SK-N-SH (cell line): ENCODE measurements at regions of chr2 and their contacts with region 1.

Region 1: GRCh38 chr2:11411768-11412448 is 54.1 kb downstream of the E2F6 start:
- DNase-seq: peak; percentile 85
- H3K4me3 ChIP-seq: peak overlapping the region; percentile 46 to 49
- H3K27ac ChIP-seq: no peak overlapping the region
- H3K4me1 ChIP-seq: peaks cover 0 to 9% of the 10 kb centered on the region in 2 experiments; a peak in 1 of 4 replicates
- H3K27me3 ChIP-seq: no peaks in the 10 kb centered on the region
- CTCF ChIP-seq: peak; percentile 96
- EP300 ChIP-seq: no peak
- RAD21 ChIP-seq: peak; percentile 97

Region 2: GRCh38 chr2:11073251-11073650 is 338.7 kb before region 1 on chr2:
- CTCF ChIA-PET with region 1: no interaction called
- POLR2A ChIA-PET with region 1: no interaction called
- DNase-seq: peak; percentile 54
- H3K4me3 ChIP-seq: no peak overlapping the region
- H3K27ac ChIP-seq: no peak overlapping the region
- H3K4me1 ChIP-seq: no peaks in the 10 kb centered on the region
- H3K27me3 ChIP-seq: no peaks in the 10 kb centered on the region
- CTCF ChIP-seq: peak; percentile 57
- EP300 ChIP-seq: no peak
- RAD21 ChIP-seq: peak; percentile 48

Region 3: DNA sequence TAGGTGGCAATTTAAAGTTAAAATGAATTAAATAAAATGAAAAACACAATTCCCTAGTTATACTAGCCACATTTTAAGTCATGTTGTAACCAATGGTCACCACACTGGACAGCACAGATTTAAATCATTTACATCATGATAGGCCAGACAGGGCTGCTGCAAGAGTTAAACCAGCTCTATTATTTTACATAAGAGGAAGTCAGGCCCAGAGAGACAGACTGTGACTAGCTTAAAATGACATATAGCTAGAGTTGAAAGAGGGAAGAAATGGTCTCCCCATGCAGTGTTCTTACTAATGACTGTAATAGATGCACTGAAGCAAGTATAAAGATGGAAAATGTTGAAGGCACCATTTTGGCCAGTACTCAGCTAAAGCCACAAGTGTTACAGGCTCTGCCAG is 187.0 kb before region 1 on chr2:
- CTCF ChIA-PET with region 1: interaction called, 159 read pairs
- POLR2A ChIA-PET with region 1: no interaction called
- DNase-seq: no peak
- H3K4me3 ChIP-seq: no peak overlapping the region
- H3K27ac ChIP-seq: no peak overlapping the region
- H3K4me1 ChIP-seq: no peaks in the 10 kb centered on the region; a peak in 1 of 4 replicates
- H3K27me3 ChIP-seq: no peaks in the 10 kb centered on the region
- CTCF ChIP-seq: no peak
- EP300 ChIP-seq: no peak
- RAD21 ChIP-seq: no peak

Region 4: GRCh38 chr2:11239666-11240462 is 172.0 kb before region 1 on chr2:
- CTCF ChIA-PET with region 1: interaction called, 159 read pairs
- POLR2A ChIA-PET with region 1: no interaction called
- DNase-seq: no peak
- H3K4me3 ChIP-seq: no peak overlapping the region
- H3K27ac ChIP-seq: peak overlapping the region in 1 of 2 experiments; percentile 7; a peak in 1 of 4 replicates
- H3K4me1 ChIP-seq: no peaks in the 10 kb centered on the region
- H3K27me3 ChIP-seq: no peaks in the 10 kb centered on the region
- CTCF ChIP-seq: no peak
- EP300 ChIP-seq: no peak
- RAD21 ChIP-seq: no peak

Region 5: GRCh38 chr2:11368059-11368572 is 43.8 kb before region 1 on chr2:
- CTCF ChIA-PET with region 1: interaction called, 11 read pairs
- POLR2A ChIA-PET with region 1: no interaction called
- DNase-seq: no peak
- H3K4me3 ChIP-seq: no peak overlapping the region
- H3K27ac ChIP-seq: no peak overlapping the region
- H3K4me1 ChIP-seq: peaks cover 0 to 23% of the 10 kb centered on the region in 2 experiments; a peak in 2 of 4 replicates
- H3K27me3 ChIP-seq: no peaks in the 10 kb centered on the region
- CTCF ChIP-seq: no peak
- EP300 ChIP-seq: no peak
- RAD21 ChIP-seq: no peak

Region 6: GRCh38 chr2:11389551-11390528 is 22.1 kb before region 1 on chr2:
- CTCF ChIA-PET with region 1: interaction called, 10 read pairs
- POLR2A ChIA-PET with region 1: no interaction called
- DNase-seq: no peak
- H3K4me3 ChIP-seq: no peak overlapping the region
- H3K27ac ChIP-seq: no peak overlapping the region
- H3K4me1 ChIP-seq: peaks cover 21 to 27% of the 10 kb centered on the region in 2 experiments; a peak in 3 of 4 replicates
- H3K27me3 ChIP-seq: no peaks in the 10 kb centered on the region
- CTCF ChIP-seq: no peak
- EP300 ChIP-seq: no peak
- RAD21 ChIP-seq: no peak

Region 7: GRCh38 chr2:11430729-11431128 is 18.8 kb after region 1 on chr2:
- CTCF ChIA-PET with region 1: interaction called, 11 read pairs
- POLR2A ChIA-PET with region 1: no interaction called
- DNase-seq: no peak
- H3K4me3 ChIP-seq: no peak overlapping the region
- H3K27ac ChIP-seq: no peak overlapping the region
- H3K4me1 ChIP-seq: peaks cover 0 to 2% of the 10 kb centered on the region in 2 experiments; a peak in 1 of 4 replicates
- H3K27me3 ChIP-seq: no peaks in the 10 kb centered on the region
- CTCF ChIP-seq: no peak
- EP300 ChIP-seq: no peak
- RAD21 ChIP-seq: no peak

Region 8: DNA sequence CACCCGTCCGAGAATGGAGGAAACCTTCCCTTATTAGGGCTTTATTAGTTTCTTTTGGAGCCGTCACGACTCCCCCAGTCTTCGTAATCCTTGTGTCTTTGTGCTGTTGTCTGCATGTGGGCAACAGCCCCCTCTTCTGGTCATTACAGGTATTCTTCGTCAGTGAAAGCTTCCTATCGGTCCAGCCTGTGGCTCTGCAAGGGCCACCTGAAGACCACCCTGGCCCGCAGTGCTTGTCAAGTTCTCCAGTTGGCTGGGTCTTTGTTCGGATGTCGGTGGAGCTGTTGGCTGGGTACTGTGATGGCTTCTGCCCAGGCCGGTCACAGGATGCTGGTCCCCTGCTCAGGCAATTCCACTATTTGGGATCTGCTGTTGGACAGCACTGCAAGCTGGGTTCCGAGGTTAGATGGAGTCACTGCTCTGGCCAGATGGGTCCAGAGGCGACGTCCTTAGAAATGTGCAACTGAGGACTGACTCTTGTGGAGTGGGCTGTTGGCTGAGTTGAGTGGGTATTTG is 34.9 kb after region 1 on chr2:
- CTCF ChIA-PET with region 1: interaction called, 32 read pairs
- POLR2A ChIA-PET with region 1: no interaction called
- DNase-seq: peak; percentile 72
- H3K4me3 ChIP-seq: no peak overlapping the region; a peak in 1 of 4 replicates
- H3K27ac ChIP-seq: no peak overlapping the region
- H3K4me1 ChIP-seq: peaks cover 0 to 9% of the 10 kb centered on the region in 2 experiments; a peak in 1 of 4 replicates
- H3K27me3 ChIP-seq: no peaks in the 10 kb centered on the region
- CTCF ChIP-seq: peak; percentile 95
- EP300 ChIP-seq: no peak
- RAD21 ChIP-seq: peak; percentile 85